ENCODE measurements at regions of chr20 and their contacts with region 1.

Region 1: DNA sequence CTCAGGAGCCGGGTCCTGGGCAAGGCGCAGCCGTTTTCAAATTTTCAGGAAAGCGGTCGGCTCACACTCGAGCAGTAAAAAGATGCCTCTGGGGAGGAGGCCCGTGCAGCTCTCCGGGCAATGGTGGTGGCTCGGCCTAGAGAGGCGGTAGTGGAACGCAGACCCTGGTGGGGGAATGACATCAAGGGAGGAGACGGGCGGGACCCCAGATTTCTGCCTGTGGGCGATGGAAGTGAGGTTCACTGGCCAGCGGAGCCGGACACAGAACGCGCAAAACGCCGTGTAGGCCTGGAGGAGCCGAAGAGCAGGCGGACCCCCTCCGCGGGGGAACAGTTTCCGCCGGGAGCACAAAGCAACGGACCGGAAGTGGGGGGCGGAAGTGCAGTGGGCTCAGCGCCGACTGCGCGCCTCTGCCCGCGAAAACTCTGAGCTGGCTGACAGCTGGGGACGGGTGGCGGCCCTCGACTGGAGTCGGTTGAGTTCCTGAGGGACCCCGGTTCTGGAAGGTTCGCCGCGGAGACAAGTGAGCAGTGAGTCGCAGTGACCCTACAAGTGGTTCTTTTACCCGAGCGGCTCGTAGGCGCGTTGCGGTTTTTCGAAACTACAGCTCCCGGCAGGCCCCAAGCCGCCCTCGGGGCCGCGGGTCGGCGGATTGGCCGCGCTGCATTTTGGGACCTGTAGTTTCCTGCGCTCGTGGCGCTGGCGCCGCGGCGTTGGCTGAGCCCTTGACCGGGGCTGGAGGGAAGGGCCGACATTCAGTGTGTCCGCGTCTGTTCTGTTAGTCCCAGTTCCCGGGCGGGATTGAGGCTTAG is at the start of gene RTEL1:
- DNase-seq: peak; percentile 88
- H3K4me3 Mint-ChIP-seq: peak within 1 kb of the TSS; percentile 90
- H3K27ac Mint-ChIP-seq: peak within 1 kb of the TSS; percentile 85
- H3K4me1 Mint-ChIP-seq: peaks cover 38% of the 10 kb centered on the region
- H3K27me3 Mint-ChIP-seq: peaks cover 3% of the 10 kb centered on the region
- total RNA-seq, gene RTEL1: 29.2 to 30.0 TPM

Region 2: DNA sequence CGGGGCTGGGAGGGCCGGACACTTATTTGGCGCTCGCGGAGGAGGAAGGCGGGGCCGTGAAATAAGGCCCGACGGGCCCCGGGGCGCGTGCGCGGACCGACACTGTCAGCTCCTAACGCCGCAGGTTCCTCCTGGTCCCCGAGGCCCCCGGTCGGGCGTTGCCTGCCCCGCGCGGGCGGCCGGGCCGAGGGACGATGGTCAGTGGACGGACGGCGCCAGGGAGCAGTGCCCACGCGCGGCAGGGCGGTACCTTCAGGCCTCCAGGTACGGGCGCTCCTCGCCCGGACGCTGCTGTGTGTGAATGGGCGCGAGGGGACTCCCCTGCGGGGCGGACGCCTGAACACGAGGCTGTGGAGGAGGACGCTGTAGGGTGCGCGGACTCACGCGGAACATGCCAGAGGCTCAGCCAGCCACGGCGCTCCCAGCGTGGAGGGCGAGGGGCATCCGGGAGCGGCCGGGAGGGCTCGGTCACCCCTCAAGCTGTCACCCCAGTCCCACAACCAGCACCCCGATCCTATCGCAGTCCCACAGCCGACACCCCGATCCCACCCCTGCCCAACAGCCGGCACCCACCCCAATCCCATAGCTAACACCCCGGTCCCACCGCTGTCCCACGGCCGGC is 30.9 kb before region 1 on chr20:
- CTCF ChIA-PET with region 1: no interaction called
- POLR2A ChIA-PET with region 1: interaction called, 15 read pairs
- DNase-seq: peak; percentile 95
- H3K4me3 Mint-ChIP-seq: peak overlapping the region; percentile 98
- H3K27ac Mint-ChIP-seq: peak overlapping the region; percentile 73
- H3K4me1 Mint-ChIP-seq: peaks cover 33% of the 10 kb centered on the region
- H3K27me3 Mint-ChIP-seq: no peaks in the 10 kb centered on the region

Region 3: DNA sequence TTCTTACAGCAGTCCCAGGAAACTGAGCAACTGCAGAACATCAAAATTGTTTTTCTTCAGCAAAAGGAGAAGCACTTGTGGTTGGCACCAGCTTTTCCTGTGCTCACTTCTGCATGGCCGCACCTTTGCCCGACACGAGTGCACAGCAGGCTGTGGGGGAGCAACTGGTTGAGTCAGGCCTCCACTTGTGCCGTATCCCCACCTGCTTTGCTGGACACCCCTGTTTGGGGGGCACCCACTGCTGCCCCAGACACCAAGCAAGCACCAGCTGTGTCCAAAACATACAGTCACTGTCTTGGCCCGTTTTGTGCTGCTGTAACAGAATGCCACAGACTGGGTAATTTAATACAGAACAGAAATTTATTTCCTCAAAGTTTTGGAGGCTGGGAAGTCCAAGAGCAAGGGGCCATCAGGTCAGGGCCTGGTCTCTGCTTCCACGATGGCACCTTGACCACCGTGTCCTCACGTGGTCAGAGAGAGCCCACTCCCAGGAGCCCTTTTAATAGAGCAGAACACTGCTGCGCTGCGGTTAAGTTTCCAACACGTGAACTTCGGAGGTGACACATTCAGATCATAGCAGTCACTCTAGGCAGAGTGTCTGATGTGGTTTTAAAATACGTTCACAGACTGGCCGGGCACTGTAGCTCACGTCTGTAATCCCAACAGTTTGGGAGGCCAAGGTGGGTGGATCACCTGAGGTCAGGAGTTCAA is 22.6 kb before region 1 on chr20:
- CTCF ChIA-PET with region 1: interaction called, 3 read pairs
- POLR2A ChIA-PET with region 1: interaction called, 12 read pairs
- DNase-seq: peak; percentile 86
- H3K4me3 Mint-ChIP-seq: peak overlapping the region; percentile 49
- H3K27ac Mint-ChIP-seq: peak overlapping the region; percentile 96
- H3K4me1 Mint-ChIP-seq: peaks cover 56% of the 10 kb centered on the region
- H3K27me3 Mint-ChIP-seq: no peaks in the 10 kb centered on the region

Region 4: DNA sequence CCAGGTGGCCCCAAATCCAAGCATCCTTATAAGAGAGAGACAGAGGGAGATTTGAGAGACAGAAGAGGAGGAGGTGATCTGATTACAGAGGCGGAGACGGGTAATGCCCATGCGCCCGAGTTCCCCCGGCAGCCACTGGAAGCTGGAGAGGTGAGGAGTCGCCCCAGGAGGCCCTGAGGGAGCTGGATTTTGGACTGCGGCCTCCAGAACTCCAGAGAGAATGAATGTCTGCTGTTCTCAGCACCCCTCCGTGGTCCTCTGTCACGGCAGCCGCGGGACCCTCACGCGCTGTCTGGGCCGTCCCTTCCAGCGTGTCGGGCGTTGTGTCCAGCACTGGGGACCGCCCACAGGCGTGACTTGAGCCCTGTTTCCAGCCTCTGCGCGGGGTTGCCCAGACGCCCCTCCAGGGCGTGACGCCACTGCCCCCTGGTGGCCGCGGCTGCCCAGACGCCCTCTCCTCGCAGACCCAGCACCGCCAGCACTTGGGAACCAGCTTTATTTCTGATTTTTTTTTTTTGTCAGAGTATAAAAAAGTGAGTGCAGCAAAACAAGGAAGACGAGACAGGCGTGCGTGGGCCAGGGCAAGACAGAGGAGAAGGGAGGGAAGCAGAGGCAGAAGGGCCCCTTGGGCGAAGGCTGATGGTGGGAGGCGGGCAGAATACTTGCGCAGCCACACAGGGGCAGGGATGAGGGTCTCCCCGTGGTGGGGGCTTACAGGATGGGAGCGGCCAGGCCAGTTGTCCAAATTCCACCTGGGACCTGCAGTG is 315.7 kb after region 1 on chr20:
- CTCF ChIA-PET with region 1: no interaction called
- POLR2A ChIA-PET with region 1: no interaction called
- DNase-seq: peak; percentile 79
- H3K4me3 Mint-ChIP-seq: no peak overlapping the region
- H3K27ac Mint-ChIP-seq: no peak overlapping the region
- H3K4me1 Mint-ChIP-seq: peaks cover 44% of the 10 kb centered on the region
- H3K27me3 Mint-ChIP-seq: no peaks in the 10 kb centered on the region

Measured in activated CD4-positive, alpha-beta memory T cell treated with anti-CD3 and anti-CD28 coated beads, Interleukin-2, amount 10 ng/mL, durations not matched to agents 7 days and 5 days (primary cell).